Activated naive CD4-positive, alpha-beta T cell treated with anti-CD3 and anti-CD28 coated beads, Interleukin-2, amount 10 ng/mL, durations not matched to agents 7 days and 5 days (primary cell): ENCODE measurements at regions of chr1 and their contacts with region 1.

Region 1: DNA sequence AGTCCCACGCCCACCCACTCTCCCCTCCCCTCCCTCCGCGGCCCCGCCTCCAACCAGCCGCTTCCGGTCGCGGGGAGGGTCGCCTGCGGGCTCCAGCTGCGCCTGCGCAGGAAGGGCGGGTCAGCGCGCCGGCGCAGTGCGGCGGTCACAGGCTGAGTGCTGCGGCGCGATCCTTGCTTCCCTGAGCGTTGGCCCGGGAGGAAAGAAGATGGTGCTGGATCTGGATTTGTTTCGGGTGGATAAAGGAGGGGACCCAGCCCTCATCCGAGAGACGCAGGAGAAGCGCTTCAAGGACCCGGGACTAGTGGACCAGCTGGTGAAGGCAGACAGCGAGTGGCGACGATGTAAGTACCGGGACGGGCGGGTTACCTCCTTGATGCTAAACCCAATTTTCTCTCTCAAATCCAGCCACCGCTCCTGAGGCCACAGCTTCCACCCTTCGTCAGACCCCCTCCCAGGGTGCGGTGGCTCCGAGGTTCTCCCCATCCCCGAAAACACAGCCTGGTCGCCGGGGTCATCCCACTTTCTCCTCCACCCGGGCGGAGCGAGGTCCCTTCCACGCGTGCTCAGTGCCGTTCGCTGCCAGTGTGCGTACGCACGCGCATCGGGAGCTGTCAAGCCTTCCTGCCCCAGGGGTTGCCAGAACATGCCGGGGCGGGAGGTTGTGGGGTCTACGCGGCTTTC is at the start of gene SARS1:
- DNase-seq: peak; percentile 89
- H3K4me3 Mint-ChIP-seq: peak within 1 kb of the TSS; percentile 99
- H3K27ac Mint-ChIP-seq: peak within 1 kb of the TSS; percentile 95
- H3K4me1 Mint-ChIP-seq: peaks cover 40% of the 10 kb centered on the region
- H3K27me3 Mint-ChIP-seq: peaks cover 20% of the 10 kb centered on the region

Region 2: DNA sequence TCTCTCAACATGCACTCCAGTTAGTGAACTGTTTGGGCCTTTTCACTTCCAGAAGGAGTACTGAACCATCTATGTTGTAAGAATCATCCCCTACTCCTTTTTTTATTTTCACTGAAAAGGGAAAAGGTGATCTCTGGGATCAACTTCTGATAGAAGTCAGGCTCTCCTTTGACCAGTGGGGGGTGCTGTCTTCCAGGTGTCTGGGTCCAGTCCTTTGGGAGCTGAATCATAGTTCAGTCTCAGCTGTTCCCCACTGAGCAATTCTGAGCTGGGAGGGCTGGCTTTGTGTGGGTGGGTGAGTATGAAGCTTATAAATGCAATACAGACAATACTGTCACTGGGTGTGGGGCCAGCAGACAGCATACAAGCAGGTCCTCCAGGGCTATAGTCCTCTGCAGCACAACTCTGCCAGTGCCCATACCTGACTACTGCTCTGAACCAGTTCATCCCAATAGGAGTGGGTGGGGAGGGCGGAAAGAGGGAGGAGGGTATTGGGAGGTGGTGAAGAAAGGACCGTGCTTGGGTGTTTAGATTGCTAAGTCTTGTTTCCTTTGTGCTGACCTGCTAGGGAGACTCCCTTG is 12.7 kb before region 1 on chr1:
- CTCF ChIA-PET with region 1: interaction called, 16 read pairs
- DNase-seq: peak; percentile 62
- H3K4me3 Mint-ChIP-seq: no peak overlapping the region
- H3K27ac Mint-ChIP-seq: no peak overlapping the region
- H3K4me1 Mint-ChIP-seq: peaks cover 14% of the 10 kb centered on the region
- H3K27me3 Mint-ChIP-seq: peaks cover 16% of the 10 kb centered on the region

Region 3: DNA sequence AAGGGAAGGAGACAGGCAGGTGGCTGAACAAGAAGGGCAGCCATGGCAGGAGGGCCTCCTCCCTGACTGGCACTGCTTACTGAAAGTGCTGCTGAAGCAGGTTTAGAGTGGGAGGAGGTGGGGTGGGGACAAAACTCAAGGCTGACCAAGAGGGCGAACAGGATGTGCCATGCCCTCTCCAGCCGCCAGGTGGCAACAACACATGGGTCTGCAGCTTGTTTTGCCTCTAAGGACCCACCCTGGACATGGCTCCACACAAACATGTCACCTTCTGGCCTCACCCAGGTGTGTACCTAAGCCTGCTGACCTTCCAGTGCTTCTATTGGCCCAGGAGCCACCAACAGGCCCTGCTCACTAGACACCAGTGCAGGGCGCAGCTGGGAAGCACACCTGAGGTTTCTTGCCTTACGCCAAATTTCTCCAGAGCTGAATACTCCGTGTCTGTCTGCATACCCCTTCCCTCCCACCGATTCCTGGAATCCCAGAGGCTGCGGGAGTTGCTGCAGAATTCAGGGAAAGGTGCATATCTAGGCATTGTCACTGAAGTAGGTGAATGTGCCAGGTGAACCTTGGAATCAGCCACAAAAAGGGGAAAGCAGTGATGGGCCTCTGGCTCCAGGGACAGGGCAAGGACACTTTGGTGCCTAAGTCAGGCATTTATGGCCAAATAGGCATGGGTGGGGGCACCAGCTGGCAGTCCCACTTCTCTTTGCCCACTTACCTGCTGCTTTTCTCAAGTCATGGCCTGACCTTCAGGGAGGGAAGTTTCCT is 63.7 kb after region 1 on chr1:
- CTCF ChIA-PET with region 1: no interaction called
- DNase-seq: peak; percentile 76
- H3K4me3 Mint-ChIP-seq: no peak overlapping the region
- H3K27ac Mint-ChIP-seq: peak overlapping the region; percentile 24
- H3K4me1 Mint-ChIP-seq: peaks cover 40% of the 10 kb centered on the region
- H3K27me3 Mint-ChIP-seq: peaks cover 4% of the 10 kb centered on the region